GM18951 (cell line): ENCODE measurements at regions of chr12 and their contacts with region 1.

Region 1: DNA sequence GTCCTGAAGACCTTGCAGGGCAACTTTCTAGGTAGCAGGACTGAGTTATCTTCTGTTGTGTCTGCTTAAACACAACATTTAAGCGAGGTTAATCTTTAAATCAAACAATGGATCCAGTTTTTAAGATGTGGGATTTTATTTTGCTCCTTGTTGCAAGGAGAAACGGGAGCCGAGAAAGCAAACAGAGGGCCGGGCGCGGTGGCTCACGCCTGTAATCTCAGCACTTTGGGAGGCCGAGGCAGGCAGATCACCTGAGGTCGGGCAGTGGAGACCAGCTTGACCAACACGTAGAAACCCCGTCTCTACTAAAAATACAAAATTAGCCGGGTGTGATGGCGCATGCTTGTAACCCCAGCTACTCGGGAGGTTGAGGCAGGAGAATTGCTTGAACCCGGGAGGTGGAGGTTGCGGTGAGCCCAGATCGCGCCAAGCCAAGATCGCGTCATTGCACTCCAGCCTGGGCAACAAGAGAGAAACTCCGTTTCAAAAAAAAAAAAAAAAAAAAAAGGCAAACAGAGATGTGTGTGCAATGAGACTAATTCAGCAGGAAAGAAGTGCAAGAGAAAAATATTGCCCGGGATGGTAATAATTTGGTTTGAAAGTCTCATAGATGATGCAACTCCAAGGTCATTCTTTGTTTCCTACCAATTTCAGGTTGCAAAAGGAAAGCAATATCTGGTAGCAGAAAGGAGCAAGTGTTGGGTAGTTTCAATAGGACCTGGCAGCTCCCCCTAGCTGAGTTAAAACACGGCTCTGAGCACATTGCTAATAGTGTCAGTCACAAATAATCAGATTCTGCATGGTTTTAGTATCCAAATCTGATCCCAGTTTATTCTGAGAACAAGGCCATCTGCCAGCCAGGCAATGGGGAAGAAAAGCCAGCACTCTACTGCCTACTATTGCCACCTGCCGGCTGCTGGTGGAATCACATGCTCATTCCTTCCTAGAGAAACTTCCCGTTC is 141.4 kb downstream of the PPM1H start:
- POLR2A ChIP-seq: no peak

Region 2: DNA sequence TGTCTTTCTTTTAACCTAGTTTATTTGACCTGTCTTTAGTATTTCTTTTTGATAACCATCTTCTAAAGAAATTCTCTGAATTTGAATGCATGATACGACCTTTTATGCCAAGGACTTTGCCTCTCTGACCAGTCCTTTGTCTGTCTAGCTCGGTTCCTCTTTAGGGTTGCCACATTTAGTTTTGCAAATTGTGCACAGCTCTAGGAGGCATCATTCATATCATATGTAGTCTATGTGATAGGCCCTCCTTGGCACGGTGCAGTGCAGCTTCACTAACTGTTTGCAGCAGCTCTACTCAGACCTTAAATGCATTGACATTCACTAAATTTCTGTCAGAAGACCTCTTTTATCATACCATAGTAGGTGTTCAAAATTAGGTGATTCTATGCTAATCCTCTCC is 457.7 kb before region 1 on chr12:
- in situ Hi-C with region 1: no loop called
- POLR2A ChIP-seq: no peak

Region 3: DNA sequence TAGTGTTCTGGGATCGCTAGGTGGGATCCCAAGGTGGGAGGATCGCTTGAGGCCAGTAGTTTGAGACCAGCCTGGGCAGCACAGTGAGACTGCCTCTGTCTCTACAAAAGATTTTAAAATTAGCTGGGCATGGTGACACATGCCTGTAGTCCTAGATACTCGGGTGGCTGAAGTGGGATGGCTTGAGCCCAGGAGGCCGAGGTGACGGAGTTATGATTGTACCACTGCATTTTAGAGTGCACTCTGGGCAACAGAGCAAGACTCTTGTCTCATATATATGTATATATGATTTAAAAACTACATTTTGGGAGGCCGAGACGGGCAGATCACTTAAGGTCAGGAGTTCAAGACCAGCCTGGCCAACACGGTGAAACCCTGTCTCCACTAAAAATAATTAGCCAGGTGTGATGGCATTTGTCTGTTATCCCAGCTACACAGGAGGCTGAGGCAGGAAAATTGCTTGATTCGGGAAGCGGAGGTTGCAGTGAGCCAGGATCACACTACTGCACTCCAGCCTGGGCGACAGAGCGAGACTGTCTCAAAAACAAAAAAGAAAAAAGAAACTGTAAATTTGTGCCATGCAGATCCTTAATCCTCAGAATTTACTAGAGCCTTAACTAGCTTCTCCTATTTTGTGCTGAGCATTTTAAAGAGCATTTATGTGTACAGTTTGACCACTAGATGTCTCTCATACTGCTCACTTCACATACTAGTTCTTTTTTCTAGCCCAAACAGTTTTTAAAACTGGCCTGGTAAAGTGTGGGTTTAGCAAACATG is 212.1 kb before region 1 on chr12:
- in situ Hi-C with region 1: loop called (anchors 5 kb)
- POLR2A ChIP-seq: no peak